K562 (cell line): ENCODE measurements at regions of chr6 and their contacts with region 1.

Region 1: GRCh38 chr6:117840541-117840983 is 66.5 kb upstream of the SLC35F1 start:
- DNase-seq: peak; percentile 10 to 45 (median 14)
- ATAC-seq: peak; percentile 71
- H3K4me3 ChIP-seq: no peak overlapping the region
- H3K27ac ChIP-seq: no peak overlapping the region
- H3K4me1 ChIP-seq: no peaks in the 10 kb centered on the region
- H3K27me3 ChIP-seq: no peaks in the 10 kb centered on the region
- CTCF ChIP-seq: peak in 2 of 3 experiments; percentile 15 to 40; a peak in 2 of 6 replicates
- EP300 ChIP-seq: no peak
- POLR2A ChIP-seq: no peak
- RAD21 ChIP-seq: peak in 1 of 2 experiments; percentile 44; a peak in 2 of 4 replicates

Region 2: GRCh38 chr6:118263921-118264486 is 423.4 kb after region 1 on chr6:
- CTCF ChIA-PET with region 1: no interaction called
- POLR2A ChIA-PET with region 1: no interaction called
- in situ Hi-C with region 1: no loop called
- intact Hi-C with region 1: loop called (anchors 10 kb)
- DNase-seq: peak in 1 of 4 experiments; percentile 18
- ATAC-seq: peak; percentile 65
- H3K4me3 ChIP-seq: no peak overlapping the region
- H3K27ac ChIP-seq: no peak overlapping the region
- H3K4me1 ChIP-seq: no peaks in the 10 kb centered on the region
- H3K27me3 ChIP-seq: no peaks in the 10 kb centered on the region; a peak in 1 of 5 replicates
- CTCF ChIP-seq: peak in 2 of 3 experiments; percentile 24 to 38; a peak in 2 of 6 replicates
- EP300 ChIP-seq: no peak
- POLR2A ChIP-seq: no peak
- RAD21 ChIP-seq: peak in 1 of 2 experiments; percentile 51; a peak in 3 of 4 replicates

Region 3: GRCh38 chr6:118589649-118590365 is 749.2 kb after region 1 on chr6:
- CTCF ChIA-PET with region 1: no interaction called
- POLR2A ChIA-PET with region 1: no interaction called
- in situ Hi-C with region 1: no loop called
- intact Hi-C with region 1: no loop called
- DNase-seq: no peak
- ATAC-seq: no peak
- H3K4me3 ChIP-seq: no peak overlapping the region
- H3K27ac ChIP-seq: no peak overlapping the region
- H3K4me1 ChIP-seq: no peaks in the 10 kb centered on the region
- H3K27me3 ChIP-seq: no peaks in the 10 kb centered on the region
- CTCF ChIP-seq: no peak
- EP300 ChIP-seq: no peak
- POLR2A ChIP-seq: no peak
- RAD21 ChIP-seq: no peak